ENCODE measurements at regions of chr12 and their contacts with region 1.

Region 1: DNA sequence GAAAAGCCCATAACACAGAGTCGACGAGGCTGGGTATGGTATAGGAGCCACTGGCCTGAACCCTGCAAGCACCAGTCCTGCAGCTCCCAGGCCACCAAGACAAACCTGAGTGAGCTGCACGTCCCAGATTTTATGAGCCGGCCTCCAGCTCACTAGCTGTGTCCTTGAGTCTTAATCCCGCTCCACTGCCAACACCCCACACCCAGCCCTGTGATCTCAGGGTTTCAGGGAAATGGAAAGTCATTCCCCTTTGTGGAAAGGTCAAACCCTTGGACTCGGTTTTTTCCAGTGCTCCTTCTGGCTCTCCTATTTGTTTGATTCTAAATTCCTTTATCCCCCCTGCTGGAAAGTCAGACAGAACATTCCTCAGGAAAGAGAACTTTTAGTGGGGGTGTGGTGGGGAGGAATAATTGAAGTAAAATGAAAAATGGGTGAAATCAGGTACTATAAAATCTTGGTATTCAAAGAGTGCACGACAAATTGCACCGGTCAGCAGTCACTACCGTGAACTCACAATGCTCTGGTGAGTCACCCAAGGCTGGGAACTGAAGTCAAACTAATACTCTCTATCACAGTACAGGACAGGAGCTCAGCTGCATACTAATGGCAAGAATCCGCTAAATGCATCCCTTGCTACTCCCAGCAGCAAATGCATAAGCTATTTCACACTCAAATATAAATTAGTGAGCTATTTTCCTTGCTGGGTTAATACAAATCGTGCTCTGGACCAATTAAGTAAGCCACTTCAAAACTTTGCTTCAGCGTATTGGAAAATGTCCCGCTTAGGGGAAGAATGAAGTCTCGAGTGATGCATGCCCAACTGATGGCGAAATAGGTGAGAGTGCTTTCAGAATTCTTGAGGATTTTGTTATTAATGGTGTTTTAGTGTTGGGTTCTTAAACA is 9.0 kb downstream of the PITPNM2 start:
- DNase-seq: no peak
- ATAC-seq: no peak
- H3K4me3 Mint-ChIP-seq: no peak overlapping the region
- H3K27ac Mint-ChIP-seq: no peak overlapping the region
- H3K4me1 Mint-ChIP-seq: peaks cover 51% of the 10 kb centered on the region
- H3K27me3 Mint-ChIP-seq: no peaks in the 10 kb centered on the region
- CTCF ChIP-seq: no peak

Region 2: GRCh38 chr12:122981047-122981918 is 160.6 kb before region 1 on chr12:
- CTCF ChIA-PET with region 1: no interaction called
- POLR2A ChIA-PET with region 1: no interaction called
- intact Hi-C with region 1: no loop called
- DNase-seq: no peak
- ATAC-seq: peak; percentile 26
- H3K4me3 Mint-ChIP-seq: peak overlapping the region; percentile 88
- H3K27ac Mint-ChIP-seq: peak overlapping the region; percentile 81
- H3K4me1 Mint-ChIP-seq: peaks cover 47% of the 10 kb centered on the region
- H3K27me3 Mint-ChIP-seq: no peaks in the 10 kb centered on the region
- CTCF ChIP-seq: no peak

Region 3: GRCh38 chr12:123033392-123034021 is 108.4 kb before region 1 on chr12:
- CTCF ChIA-PET with region 1: no interaction called
- POLR2A ChIA-PET with region 1: no interaction called
- intact Hi-C with region 1: no loop called
- DNase-seq: no peak
- ATAC-seq: no peak
- H3K4me3 Mint-ChIP-seq: no peak overlapping the region
- H3K27ac Mint-ChIP-seq: no peak overlapping the region
- H3K4me1 Mint-ChIP-seq: peaks cover 18% of the 10 kb centered on the region
- H3K27me3 Mint-ChIP-seq: no peaks in the 10 kb centered on the region
- CTCF ChIP-seq: no peak

Region 4: GRCh38 chr12:123043536-123044001 is 98.3 kb before region 1 on chr12:
- CTCF ChIA-PET with region 1: interaction called, 5 read pairs
- POLR2A ChIA-PET with region 1: interaction called, 9 read pairs
- intact Hi-C with region 1: loop called (anchors 2 kb)
- DNase-seq: peak; percentile 51
- ATAC-seq: peak; percentile 97
- H3K4me3 Mint-ChIP-seq: no peak overlapping the region
- H3K27ac Mint-ChIP-seq: no peak overlapping the region
- H3K4me1 Mint-ChIP-seq: peaks cover 16% of the 10 kb centered on the region
- H3K27me3 Mint-ChIP-seq: no peaks in the 10 kb centered on the region
- CTCF ChIP-seq: no peak

Region 5: GRCh38 chr12:123075646-123076171 is 66.2 kb before region 1 on chr12:
- CTCF ChIA-PET with region 1: no interaction called
- POLR2A ChIA-PET with region 1: interaction called, 5 read pairs
- intact Hi-C with region 1: loop called (anchors 2 kb)
- DNase-seq: no peak
- ATAC-seq: peak; percentile 88
- H3K4me3 Mint-ChIP-seq: peak overlapping the region; percentile 36
- H3K27ac Mint-ChIP-seq: peak overlapping the region; percentile 76
- H3K4me1 Mint-ChIP-seq: peaks cover 32% of the 10 kb centered on the region
- H3K27me3 Mint-ChIP-seq: no peaks in the 10 kb centered on the region
- CTCF ChIP-seq: no peak

Region 6: DNA sequence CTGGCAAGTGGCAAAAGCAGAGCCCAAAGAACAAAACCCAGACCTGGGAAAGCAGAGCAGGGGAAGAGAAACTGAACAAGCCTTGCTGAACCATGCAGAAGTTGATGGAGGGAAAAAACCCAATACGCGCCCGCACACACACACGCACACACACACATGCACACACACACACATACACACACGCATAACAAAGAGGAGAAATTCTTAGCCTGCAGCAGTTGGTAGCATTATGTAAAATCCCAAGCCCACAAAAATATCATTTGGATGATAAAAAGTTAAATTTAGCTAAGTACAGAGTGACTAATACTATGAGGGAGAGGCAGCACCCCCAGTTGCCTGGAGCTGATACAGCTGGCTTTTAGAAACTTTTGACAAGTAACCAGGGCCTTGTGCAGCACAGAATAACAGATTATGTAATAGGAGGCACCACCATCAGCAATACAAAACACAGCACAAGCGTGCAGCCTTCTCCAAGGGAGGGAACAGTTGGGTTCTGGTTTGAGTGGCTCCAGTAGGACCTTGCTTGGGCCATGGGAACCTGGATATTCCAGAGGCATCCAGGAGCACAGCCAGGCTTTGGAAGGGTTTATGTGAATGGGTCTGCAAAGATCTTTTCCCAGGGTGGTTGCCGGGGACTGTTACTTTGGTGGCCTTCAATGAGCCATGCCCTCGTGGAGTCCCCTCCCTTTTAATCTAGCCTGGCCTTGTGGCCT is 26.3 kb before region 1 on chr12:
- CTCF ChIA-PET with region 1: interaction called, 3 read pairs
- POLR2A ChIA-PET with region 1: interaction called, 5 read pairs
- intact Hi-C with region 1: loop called (anchors 1 kb)
- DNase-seq: peak; percentile 32
- ATAC-seq: peak; percentile 70
- H3K4me3 Mint-ChIP-seq: peak overlapping the region; percentile 29
- H3K27ac Mint-ChIP-seq: peak overlapping the region; percentile 75
- H3K4me1 Mint-ChIP-seq: peaks cover 81% of the 10 kb centered on the region
- H3K27me3 Mint-ChIP-seq: no peaks in the 10 kb centered on the region
- CTCF ChIP-seq: no peak

Measured in activated B cell treated with CpG ODN at 0.5 μM for 24 hours (primary cell).